Breast epithelium (tissue), 4 donors: ENCODE measurements at regions of chr12 and their contacts with region 1.

Region 1: GRCh38 chr12:127797918-127798317 is 469.1 kb upstream of the TMEM132C start:
- DNase-seq: no peak
- H3K4me3 ChIP-seq: no peak overlapping the region
- H3K27ac ChIP-seq: no peak overlapping the region
- H3K4me1 ChIP-seq: no peaks in the 10 kb centered on the region
- H3K27me3 ChIP-seq: no peaks in the 10 kb centered on the region
- CTCF ChIP-seq: no peak
- POLR2A ChIP-seq: no peak

Region 2: GRCh38 chr12:127873306-127873705 is 75.4 kb after region 1 on chr12:
- intact Hi-C with region 1: loop called (anchors 5 kb)
- DNase-seq: no peak
- H3K4me3 ChIP-seq: no peak overlapping the region
- H3K27ac ChIP-seq: no peak overlapping the region
- H3K4me1 ChIP-seq: no peaks in the 10 kb centered on the region
- H3K27me3 ChIP-seq: no peaks in the 10 kb centered on the region
- CTCF ChIP-seq: no peak
- POLR2A ChIP-seq: no peak

Region 3: DNA sequence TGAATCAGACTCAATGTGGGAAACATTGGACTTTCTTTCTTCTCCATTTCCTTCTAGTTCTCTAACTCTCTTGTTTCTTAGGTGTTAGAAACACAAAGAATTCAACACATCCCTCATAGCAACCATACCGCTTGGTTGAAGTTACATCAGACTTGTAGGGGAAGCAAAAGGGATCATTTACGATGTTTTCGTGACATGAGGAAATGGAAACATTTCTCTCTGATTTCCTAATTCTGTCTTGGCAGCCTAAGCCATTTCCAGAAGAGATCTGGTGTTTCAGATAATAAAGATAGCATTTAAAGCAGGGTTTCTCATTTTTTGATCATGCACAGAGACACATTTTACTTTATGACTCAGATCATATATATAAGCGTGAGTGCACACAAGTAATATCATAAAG is 671.0 kb after region 1 on chr12:
- intact Hi-C with region 1: no loop called
- DNase-seq: no peak
- H3K4me3 ChIP-seq: no peak overlapping the region
- H3K27ac ChIP-seq: no peak overlapping the region
- H3K4me1 ChIP-seq: no peaks in the 10 kb centered on the region
- H3K27me3 ChIP-seq: no peaks in the 10 kb centered on the region
- CTCF ChIP-seq: no peak
- POLR2A ChIP-seq: no peak